Activated CD4-positive, alpha-beta T cell treated with anti-CD3 and anti-CD28 coated beads for 36 hours (primary cell): ENCODE measurements at regions of chr20 and their contacts with region 1.

Region 1: DNA sequence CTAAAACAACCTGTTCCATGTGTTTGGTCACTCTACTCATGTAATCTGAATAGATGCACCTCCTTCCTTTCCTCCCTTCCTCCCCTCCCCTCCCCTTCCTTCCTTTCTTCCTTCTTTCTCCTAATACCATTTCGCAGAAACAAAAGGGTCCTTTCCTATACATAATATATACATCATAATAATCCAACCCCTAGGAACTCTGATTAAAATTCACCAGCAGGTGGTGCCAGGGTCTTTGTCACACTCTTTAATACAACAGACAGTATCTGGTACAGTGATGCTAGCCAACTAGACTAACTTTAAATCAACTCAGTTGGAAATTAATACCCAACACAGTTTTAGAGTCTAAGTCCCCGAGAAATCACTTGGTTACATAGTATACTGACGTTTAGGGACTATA is 181.2 kb upstream of the SHLD1 start:
- DNase-seq: peak; percentile 68
- ATAC-seq: peak; percentile 89
- H3K4me3 Mint-ChIP-seq: no peak overlapping the region
- H3K27ac Mint-ChIP-seq: peak overlapping the region; percentile 23
- H3K4me1 Mint-ChIP-seq: peaks cover 36% of the 10 kb centered on the region
- H3K27me3 Mint-ChIP-seq: no peaks in the 10 kb centered on the region

Region 2: DNA sequence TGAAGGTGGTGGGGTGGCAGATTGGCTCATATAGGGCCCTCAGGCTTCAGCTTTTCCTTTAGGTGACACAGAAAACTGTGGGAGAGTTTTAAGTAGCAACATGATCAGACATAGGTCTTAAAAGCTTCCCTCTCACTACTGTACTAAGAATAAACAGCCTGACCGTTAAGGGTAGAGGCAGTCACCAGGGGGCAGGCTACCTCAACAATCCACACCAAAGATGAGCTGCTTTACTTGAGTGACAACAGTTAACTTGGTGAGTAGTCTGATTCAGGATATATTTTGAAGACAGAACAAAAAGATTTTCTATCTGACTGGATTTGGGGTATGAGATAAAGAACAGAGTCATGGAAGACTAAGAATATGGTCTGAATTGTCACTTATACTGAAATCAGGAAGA is 11.9 kb before region 1 on chr20:
- CTCF ChIA-PET with region 1: interaction called, 41 read pairs
- POLR2A ChIA-PET with region 1: no interaction called
- intact Hi-C with region 1: no loop called
- DNase-seq: peak; percentile 77
- ATAC-seq: peak; percentile 90
- H3K4me3 Mint-ChIP-seq: no peak overlapping the region
- H3K27ac Mint-ChIP-seq: peak overlapping the region; percentile 51
- H3K4me1 Mint-ChIP-seq: peaks cover 2% of the 10 kb centered on the region
- H3K27me3 Mint-ChIP-seq: no peaks in the 10 kb centered on the region